ENCODE measurements at regions of chr6 and their contacts with region 1.

Region 1: DNA sequence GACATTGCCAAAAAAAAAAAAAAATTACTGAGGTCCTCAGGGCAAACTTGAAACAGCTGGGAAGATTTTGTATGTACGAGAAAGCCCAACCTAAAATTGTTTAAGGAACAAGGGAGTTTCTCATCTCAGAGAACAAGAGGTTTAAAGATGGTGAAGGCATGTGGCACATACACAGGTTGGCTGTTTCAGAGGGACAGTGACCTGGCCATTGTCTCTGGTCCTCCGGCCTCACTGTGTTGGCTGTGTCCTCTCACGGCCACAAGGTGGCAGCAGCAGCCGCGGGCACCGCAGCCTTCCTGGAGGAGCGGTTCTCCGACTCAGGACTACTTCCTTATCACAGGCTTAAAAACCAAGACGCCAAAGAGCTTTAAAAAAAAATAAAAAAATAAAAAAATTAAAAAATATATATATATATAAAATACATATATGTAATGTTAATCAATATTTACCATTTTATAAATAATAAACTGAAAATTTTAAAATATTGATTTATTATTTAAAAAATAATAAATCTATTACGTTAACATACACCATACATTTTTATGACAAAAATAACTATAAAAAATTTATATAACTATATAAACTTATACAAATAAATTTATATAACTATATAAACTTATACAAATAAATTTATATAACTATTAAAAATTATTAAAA is 52.8 kb downstream of the GTF2H5 start:
- DNase-seq: peak; percentile 56 to 69 (median 67)
- H3K4me3 ChIP-seq: no peak overlapping the region
- H3K4me3 Mint-ChIP-seq: no peak overlapping the region
- H3K27ac ChIP-seq: no peak overlapping the region
- H3K27ac Mint-ChIP-seq: peak overlapping the region in 1 of 7 donors; percentile 35
- H3K4me1 ChIP-seq: no peaks in the 10 kb centered on the region
- H3K4me1 Mint-ChIP-seq: peaks cover 1 to 4% (median 2%) of the 10 kb centered on the region in 4 donors
- H3K27me3 ChIP-seq: no peaks in the 10 kb centered on the region
- H3K27me3 Mint-ChIP-seq: no peaks in the 10 kb centered on the region

Region 2: DNA sequence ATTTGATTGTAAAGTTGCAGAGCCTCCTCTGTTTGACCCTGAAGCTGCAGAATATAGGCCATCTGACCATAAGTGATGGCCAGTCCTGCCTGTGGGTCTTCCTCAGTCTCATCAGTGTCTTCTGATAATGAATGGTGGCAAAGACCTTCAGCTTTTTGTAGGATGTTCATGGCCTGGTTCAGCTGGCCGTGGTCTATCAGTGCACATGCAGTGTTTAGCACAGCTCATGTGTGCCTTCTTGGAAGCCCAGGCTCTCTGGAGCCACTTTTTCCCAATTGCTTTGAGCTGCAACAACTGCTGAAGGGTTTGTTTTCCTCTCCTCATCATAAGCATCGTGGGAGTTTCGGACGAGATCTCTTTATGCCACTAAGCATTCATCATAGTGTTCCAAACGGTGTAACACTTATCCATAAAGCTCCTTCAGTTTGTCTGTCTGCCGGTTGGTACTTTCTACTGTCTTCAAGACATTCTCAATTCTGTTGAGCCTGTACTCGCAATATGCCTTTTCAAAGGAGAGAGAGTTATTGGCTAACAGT is 21.2 kb after region 1 on chr6:
- CTCF ChIA-PET with region 1: interaction called, 15 read pairs
- POLR2A ChIA-PET with region 1: no interaction called
- intact Hi-C with region 1: no loop called
- DNase-seq: no peak
- H3K4me3 ChIP-seq: no peak overlapping the region
- H3K4me3 Mint-ChIP-seq: peak overlapping the region in 5 of 8 donors; percentile 0 to 63 (median 40)
- H3K27ac ChIP-seq: no peak overlapping the region
- H3K27ac Mint-ChIP-seq: peak overlapping the region; percentile 9 to 74 (median 33)
- H3K4me1 ChIP-seq: peaks cover 27% of the 10 kb centered on the region
- H3K4me1 Mint-ChIP-seq: peaks cover 24 to 33% (median 27%) of the 10 kb centered on the region in 4 donors
- H3K27me3 ChIP-seq: no peaks in the 10 kb centered on the region
- H3K27me3 Mint-ChIP-seq: no peaks in the 10 kb centered on the region

Region 3: DNA sequence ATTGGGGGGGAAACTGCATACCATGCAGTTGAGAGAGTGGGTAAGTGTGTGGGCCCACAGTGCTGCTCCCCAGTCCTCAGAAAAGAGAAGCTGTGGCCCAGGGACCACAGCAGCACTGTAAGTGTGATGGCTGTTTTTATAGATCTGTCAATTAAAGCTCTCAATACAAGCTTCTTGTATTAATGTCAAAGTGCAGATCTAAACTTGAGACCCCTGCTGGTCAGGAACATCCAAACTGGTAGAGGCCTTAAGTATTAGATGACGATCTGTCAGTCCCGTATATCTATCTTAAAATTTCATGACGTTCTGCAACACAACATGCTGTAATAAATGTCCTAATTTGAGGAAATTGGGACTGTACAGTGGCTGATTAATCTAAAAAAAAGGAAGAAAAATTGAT is 166.1 kb after region 1 on chr6:
- CTCF ChIA-PET with region 1: interaction called, 44 read pairs
- POLR2A ChIA-PET with region 1: no interaction called
- intact Hi-C with region 1: loop called (anchors 1 kb)
- DNase-seq: peak in 4 of 5 donors; percentile 3 to 30 (median 8)
- H3K4me3 ChIP-seq: no peak overlapping the region
- H3K4me3 Mint-ChIP-seq: no peak overlapping the region
- H3K27ac ChIP-seq: no peak overlapping the region
- H3K27ac Mint-ChIP-seq: no peak overlapping the region
- H3K4me1 ChIP-seq: no peaks in the 10 kb centered on the region
- H3K4me1 Mint-ChIP-seq: peaks cover 0 to 12% (median 6%) of the 10 kb centered on the region in 4 donors
- H3K27me3 ChIP-seq: no peaks in the 10 kb centered on the region
- H3K27me3 Mint-ChIP-seq: no peaks in the 10 kb centered on the region

Region 4: DNA sequence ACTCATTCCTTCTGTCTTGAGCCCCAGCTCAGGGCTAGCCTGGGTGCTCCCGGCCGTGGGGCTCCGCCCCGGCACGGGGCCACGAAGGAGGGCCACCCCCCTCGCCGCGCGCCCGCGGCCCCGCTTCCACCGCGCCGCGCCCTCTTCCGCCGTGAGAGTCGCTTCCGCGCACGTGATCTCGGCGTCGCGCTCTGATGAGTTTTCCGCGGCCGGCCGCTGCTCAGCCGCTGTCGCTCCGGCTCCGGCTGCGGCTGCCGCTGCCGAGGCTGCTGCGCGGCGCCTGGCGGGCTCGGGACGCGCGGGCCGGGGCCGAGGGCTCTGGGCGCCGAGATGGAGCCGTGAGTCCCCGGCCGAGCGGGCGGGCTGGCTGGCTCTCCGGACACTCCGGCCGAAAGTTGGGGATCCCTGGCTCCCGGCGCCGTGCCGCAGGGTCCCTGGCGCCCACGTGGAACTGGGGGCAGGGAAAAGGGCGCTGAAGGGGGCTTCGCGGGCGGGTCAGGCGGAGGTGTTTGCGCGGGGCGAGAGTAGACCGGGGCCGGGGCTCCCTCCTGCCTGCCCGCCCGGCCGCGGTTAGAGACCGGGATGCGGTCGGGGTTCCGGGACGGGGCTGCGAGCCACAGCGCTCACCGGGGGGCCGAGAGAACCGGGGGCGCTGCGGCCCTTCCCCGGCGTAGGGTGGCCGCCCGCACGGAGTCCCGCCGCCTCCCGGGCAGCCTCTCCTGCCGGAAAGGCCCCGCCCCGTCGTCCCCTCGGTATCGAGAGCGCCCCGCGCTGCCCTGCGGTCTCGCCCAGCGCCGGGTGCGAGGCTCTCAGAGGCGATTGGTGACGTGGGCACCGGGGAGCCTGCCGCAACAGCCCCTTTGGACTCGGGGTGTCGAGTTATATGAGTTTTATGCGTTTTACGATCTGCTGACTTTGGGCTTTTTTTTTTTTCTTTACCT is 339.3 kb after region 1 on chr6 and contains the start of gene TMEM181:
- CTCF ChIA-PET with region 1: interaction called, 11 read pairs
- POLR2A ChIA-PET with region 1: no interaction called
- intact Hi-C with region 1: no loop called
- DNase-seq: peak; percentile 83 to 87 (median 87)
- H3K4me3 ChIP-seq: peak within 1 kb of the TSS; percentile 32 to 71
- H3K4me3 Mint-ChIP-seq: peak within 1 kb of the TSS; percentile 90 to 98 (median 96)
- H3K27ac ChIP-seq: peak within 1 kb of the TSS; percentile 81
- H3K27ac Mint-ChIP-seq: peak within 1 kb of the TSS; percentile 87 to 98 (median 95)
- H3K4me1 ChIP-seq: peaks cover 50% of the 10 kb centered on the region
- H3K4me1 Mint-ChIP-seq: peaks cover 30 to 50% (median 43%) of the 10 kb centered on the region in 4 donors
- H3K27me3 ChIP-seq: no peaks in the 10 kb centered on the region
- H3K27me3 Mint-ChIP-seq: no peaks in the 10 kb centered on the region
- total RNA-seq, gene TMEM181: 26.1 to 28.0 TPM

Region 5: DNA sequence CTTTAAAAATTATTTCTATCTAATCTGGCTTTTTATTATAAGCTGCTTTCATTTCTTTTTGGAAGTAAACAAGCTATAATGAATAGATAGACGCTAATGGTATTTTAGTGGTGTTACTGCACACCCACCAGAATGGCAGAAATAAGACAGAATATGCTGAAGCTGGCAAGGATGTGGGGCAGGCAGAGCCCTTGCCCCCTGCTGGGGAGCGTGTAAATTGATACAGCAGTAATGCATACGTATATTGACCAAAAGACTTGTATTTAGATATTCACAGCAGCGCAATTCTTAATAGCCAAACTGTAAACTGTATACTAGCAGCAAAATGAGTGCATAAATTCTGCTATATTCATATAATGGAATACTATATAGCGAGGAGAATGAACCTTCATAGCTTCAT is 374.3 kb after region 1 on chr6:
- CTCF ChIA-PET with region 1: interaction called, 18 read pairs
- POLR2A ChIA-PET with region 1: no interaction called
- intact Hi-C with region 1: no loop called
- DNase-seq: peak in 4 of 5 donors; percentile 12 to 26 (median 21)
- H3K4me3 ChIP-seq: no peak overlapping the region
- H3K4me3 Mint-ChIP-seq: no peak overlapping the region
- H3K27ac ChIP-seq: no peak overlapping the region
- H3K27ac Mint-ChIP-seq: peak overlapping the region in 1 of 7 donors; percentile 52
- H3K4me1 ChIP-seq: no peaks in the 10 kb centered on the region
- H3K4me1 Mint-ChIP-seq: peaks cover 0 to 12% (median 2%) of the 10 kb centered on the region in 4 donors
- H3K27me3 ChIP-seq: no peaks in the 10 kb centered on the region
- H3K27me3 Mint-ChIP-seq: no peaks in the 10 kb centered on the region

Region 6: GRCh38 chr6:158610319-158610968 is 389.5 kb after region 1 on chr6:
- CTCF ChIA-PET with region 1: interaction called, 22 read pairs
- POLR2A ChIA-PET with region 1: no interaction called
- intact Hi-C with region 1: loop called (anchors 1 kb)
- DNase-seq: no peak
- H3K4me3 ChIP-seq: no peak overlapping the region
- H3K4me3 Mint-ChIP-seq: no peak overlapping the region
- H3K27ac ChIP-seq: no peak overlapping the region
- H3K27ac Mint-ChIP-seq: peak overlapping the region in 4 of 7 donors; percentile 4 to 61 (median 25)
- H3K4me1 ChIP-seq: no peaks in the 10 kb centered on the region
- H3K4me1 Mint-ChIP-seq: peaks cover under 1 to 5% (median 3%) of the 10 kb centered on the region in 4 donors
- H3K27me3 ChIP-seq: no peaks in the 10 kb centered on the region
- H3K27me3 Mint-ChIP-seq: no peaks in the 10 kb centered on the region

Region 7: DNA sequence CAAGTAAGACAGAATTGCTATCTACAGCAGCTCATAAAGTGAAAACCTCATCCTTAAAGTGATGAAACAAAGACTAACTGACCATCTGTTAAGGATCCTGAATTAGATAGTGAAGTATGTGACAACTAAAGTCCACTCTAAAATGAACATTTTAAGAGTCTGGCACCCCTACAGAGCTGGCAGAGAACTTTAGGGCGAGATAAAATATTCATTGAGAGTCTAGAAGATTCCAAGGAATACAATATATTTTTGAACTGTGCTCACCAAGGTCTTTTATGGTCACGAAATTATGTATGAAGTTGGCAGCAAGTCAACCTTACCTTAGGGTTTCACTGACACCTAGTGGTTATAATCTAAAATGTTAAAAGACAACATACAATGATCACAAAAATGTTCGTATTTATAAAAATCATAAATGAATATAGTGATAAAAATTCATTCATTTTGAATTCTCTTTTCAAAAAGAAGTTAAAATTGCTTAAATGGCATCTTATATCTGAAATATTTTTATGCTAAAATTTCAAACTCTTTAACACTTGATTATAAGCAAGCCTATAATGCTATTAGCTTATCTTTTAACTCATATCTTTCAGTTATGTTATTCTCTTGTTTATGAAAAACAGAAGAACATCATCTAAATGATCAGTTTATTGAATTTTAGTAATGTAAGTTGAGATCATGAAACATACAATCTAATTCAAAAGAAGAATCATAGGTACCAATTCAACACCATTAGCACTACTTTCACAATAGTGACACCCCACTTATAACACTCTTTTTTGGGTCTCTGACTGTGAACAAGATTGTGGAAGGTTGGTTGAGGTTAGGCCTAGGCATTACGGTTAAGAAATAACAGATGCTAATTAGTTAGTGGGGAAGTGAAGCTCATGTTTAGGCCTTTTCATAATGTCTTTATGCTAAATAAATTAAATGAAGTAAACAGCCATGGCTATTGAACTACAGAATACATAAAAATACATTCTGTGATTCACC is 751.6 kb after region 1 on chr6:
- CTCF ChIA-PET with region 1: interaction called, 9 read pairs
- POLR2A ChIA-PET with region 1: no interaction called
- intact Hi-C with region 1: loop called (anchors 2 kb)
- DNase-seq: peak in 4 of 5 donors; percentile 57 to 66 (median 60)
- H3K4me3 ChIP-seq: no peak overlapping the region
- H3K4me3 Mint-ChIP-seq: no peak overlapping the region
- H3K27ac ChIP-seq: no peak overlapping the region
- H3K27ac Mint-ChIP-seq: peak overlapping the region in 2 of 7 donors; percentile 31 to 47
- H3K4me1 ChIP-seq: no peaks in the 10 kb centered on the region
- H3K4me1 Mint-ChIP-seq: peaks cover 0 to 3% (median 0%) of the 10 kb centered on the region in 4 donors
- H3K27me3 ChIP-seq: no peaks in the 10 kb centered on the region
- H3K27me3 Mint-ChIP-seq: no peaks in the 10 kb centered on the region